Panc1 (cell line): ENCODE measurements at regions of chr14 and their contacts with region 1.

Region 1: DNA sequence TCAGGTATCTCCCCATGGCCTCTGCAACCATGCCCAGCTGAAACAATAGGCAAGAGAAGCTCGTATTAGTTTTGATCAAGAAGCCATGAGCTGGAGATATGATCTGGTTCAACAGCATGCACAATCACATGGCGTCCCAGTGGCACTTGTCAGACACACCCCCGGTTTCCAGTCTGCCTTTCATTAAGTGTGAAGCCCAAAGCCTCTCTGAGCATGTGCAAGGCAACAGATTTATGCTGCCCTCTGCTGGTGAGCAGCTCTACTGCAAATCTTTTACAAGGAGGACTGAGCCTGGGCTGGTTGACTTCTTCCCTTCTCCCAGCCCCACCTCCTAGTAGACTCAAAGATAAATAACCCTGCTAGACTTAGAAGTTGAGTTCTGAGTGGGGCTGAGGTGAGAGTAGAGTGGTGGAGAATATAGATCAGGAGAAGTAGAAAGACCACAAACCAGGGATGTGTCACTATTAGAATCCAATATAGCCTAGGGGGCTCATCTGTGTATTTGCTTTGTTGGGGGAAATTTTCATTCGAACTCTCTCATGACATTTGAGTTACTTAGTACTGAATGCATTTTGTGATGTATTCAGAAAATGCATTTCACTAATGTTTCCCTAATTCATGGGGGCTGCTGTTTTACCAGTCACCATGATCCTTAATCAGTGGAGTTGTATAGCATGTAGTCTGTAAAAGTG is 53.7 kb upstream of the MBIP start:
- DNase-seq: peak; percentile 41
- ATAC-seq: peak; percentile 82
- H3K4me3 ChIP-seq: no peak overlapping the region
- H3K27ac ChIP-seq: no peak overlapping the region
- H3K4me1 ChIP-seq: no peaks in the 10 kb centered on the region
- H3K27me3 ChIP-seq: no peaks in the 10 kb centered on the region
- CTCF ChIP-seq: peak; percentile 84

Region 2: GRCh38 chr14:35927727-35928304 is 446.3 kb before region 1 on chr14:
- CTCF ChIA-PET with region 1: no interaction called
- POLR2A ChIA-PET with region 1: no interaction called
- in situ Hi-C with region 1: no loop called
- intact Hi-C with region 1: no loop called
- DNase-seq: no peak
- ATAC-seq: no peak
- H3K4me3 ChIP-seq: no peak overlapping the region
- H3K27ac ChIP-seq: no peak overlapping the region
- H3K4me1 ChIP-seq: no peaks in the 10 kb centered on the region
- H3K27me3 ChIP-seq: no peaks in the 10 kb centered on the region
- CTCF ChIP-seq: no peak

Region 3: GRCh38 chr14:36207500-36207899 is 166.6 kb before region 1 on chr14:
- CTCF ChIA-PET with region 1: no interaction called
- POLR2A ChIA-PET with region 1: no interaction called
- in situ Hi-C with region 1: no loop called
- intact Hi-C with region 1: loop called (anchors 10 kb)
- DNase-seq: no peak
- ATAC-seq: no peak; the same call in 1 of the 2 replicates
- H3K4me3 ChIP-seq: no peak overlapping the region
- H3K27ac ChIP-seq: no peak overlapping the region
- H3K4me1 ChIP-seq: no peaks in the 10 kb centered on the region
- H3K27me3 ChIP-seq: no peaks in the 10 kb centered on the region
- CTCF ChIP-seq: peak; percentile 47; the same call in 1 of the 2 replicates

Region 4: DNA sequence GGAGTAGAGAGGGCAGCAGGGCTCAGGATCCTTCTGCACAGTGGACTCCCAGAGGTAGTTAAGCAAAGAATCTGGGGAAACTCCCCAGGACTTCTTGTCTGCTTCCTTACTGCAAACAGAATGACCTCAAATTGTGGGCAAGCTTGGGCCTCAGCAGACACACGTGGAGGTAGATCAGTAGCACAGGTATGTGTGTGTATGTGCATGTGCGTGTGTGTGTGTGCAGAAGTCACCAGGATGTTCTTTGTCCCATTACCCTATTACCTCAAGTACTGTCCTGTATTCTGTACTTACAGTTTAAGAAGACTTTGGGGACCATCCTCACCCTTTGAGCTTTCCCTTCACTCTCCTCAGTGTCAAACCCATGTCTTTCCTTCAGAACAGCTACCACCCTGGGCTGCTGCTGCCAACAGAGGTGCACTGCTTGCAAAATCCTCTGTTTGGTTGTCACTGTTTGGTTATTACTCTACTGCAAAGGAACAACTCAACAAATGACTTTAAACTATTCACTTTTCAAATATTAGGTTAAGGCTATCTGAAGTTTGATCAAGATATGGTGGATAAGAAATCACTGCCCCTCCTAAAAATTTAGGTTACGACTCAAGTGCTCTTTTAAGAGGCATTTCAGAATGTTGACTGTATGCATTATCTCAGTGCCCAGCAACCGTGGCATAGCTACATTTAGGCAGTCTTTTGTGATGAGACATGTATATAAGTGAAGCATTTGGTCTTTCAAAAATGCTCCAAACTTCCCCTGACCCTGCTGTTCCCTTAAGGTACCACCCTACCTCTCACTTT is 24.5 kb after region 1 on chr14:
- CTCF ChIA-PET with region 1: no interaction called
- POLR2A ChIA-PET with region 1: no interaction called
- in situ Hi-C with region 1: no loop called
- intact Hi-C with region 1: no loop called
- DNase-seq: no peak
- ATAC-seq: no peak
- H3K4me3 ChIP-seq: no peak overlapping the region
- H3K27ac ChIP-seq: no peak overlapping the region
- H3K4me1 ChIP-seq: no peaks in the 10 kb centered on the region
- H3K27me3 ChIP-seq: no peaks in the 10 kb centered on the region
- CTCF ChIP-seq: no peak

Region 5: GRCh38 chr14:36619853-36620252 is 245.7 kb after region 1 on chr14:
- CTCF ChIA-PET with region 1: no interaction called
- POLR2A ChIA-PET with region 1: no interaction called
- in situ Hi-C with region 1: no loop called
- intact Hi-C with region 1: no loop called
- DNase-seq: no peak
- ATAC-seq: no peak
- H3K4me3 ChIP-seq: no peak overlapping the region
- H3K27ac ChIP-seq: no peak overlapping the region
- H3K4me1 ChIP-seq: no peaks in the 10 kb centered on the region
- H3K27me3 ChIP-seq: no peaks in the 10 kb centered on the region
- CTCF ChIP-seq: no peak